Cardiac septum (tissue), 1 donor: ENCODE measurements at regions of chr2 and their contacts with region 1.

Region 1: DNA sequence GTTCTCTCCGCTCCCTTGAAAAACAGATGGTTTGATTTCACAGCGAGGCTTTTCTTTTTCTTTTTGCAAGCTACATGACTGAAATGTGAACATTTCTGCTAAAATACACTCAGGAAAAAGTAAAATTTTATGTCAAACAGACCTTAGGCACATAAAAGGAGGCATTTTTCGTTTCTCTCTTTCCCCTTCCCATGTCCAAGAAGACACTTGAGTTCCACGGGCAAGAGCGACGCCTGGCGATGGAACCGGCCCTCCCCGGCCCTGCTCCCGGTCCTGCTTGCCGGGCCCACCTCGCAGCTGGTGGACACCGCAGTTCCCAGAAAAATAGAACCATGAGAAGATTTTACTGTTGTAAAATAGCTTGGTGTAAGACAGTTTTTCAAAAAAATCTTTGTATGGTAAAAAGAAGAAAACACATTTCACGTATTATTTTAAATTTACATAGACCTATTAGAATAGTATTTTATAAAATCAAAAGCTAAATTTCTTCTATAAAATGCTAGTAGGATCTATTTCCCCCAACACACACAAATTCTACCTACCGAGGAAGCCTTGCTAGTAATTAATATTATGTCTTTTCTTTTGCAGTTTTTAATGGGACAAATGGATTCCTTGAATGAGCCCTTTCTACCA is 2.3 kb upstream of the ALKAL2 start:
- DNase-seq: no peak

Region 2: GRCh38 chr2:55587-56448 is 234.4 kb before region 1 on chr2:
- intact Hi-C with region 1: no loop called
- DNase-seq: no peak

Region 3: DNA sequence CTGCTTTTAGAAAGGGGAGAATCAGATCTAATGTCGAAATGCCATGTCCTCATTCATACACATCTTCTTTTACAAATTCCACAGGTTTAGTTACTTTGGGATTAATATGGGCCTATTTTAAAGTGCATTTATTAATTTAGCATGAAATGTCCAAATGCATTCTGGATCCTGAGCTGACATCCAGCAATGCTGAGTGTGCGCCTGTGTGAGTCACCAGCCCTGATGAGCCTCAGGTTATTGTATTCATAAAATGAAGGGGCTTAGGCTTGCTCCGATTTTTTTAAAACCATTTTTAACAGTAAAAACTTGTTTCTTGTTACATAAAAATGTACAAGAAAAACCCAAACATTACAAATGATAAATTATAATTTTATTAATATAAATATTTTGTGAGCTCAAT is 120.5 kb before region 1 on chr2:
- intact Hi-C with region 1: loop called (anchors 5 kb)
- DNase-seq: no peak

Region 4: GRCh38 chr2:193141-193671 is 97.0 kb before region 1 on chr2:
- intact Hi-C with region 1: no loop called
- DNase-seq: no peak

Region 5: GRCh38 chr2:246489-247144 is 43.6 kb before region 1 on chr2:
- intact Hi-C with region 1: loop called (anchors 10 kb)
- DNase-seq: no peak

Region 6: DNA sequence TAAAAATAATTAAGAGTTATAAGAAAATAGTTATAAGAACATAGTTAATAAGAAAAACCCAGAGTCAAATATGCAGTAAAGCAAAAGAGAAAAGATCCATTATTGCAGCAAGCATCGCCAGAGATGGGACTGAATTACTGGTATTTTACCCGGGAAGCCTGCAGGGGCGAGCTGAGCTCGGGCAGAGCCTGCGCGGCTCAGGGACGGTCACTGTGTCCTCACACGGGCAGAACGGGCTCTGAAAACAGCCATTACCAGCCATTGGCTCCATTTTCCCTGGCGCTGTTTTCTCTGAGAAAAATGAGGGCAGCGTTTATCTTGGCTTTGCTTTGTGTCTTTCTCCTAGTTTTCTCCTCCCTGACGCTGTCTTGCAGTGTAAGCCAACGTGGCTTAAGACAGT is 93.0 kb after region 1 on chr2:
- intact Hi-C with region 1: no loop called
- DNase-seq: no peak